Activated CD4-positive, alpha-beta T cell treated with anti-CD3 and anti-CD28 coated beads, Interleukin-2, amount 10 ng/mL, durations not matched to agents 24 days and 14 days (primary cell): ENCODE measurements at regions of chr15 and their contacts with region 1.

Region 1: GRCh38 chr15:43776718-43777583 is at the start of gene ELL3:
- DNase-seq: peak; percentile 94
- H3K4me3 Mint-ChIP-seq: peak within 1 kb of the TSS; percentile 90
- H3K27ac Mint-ChIP-seq: peak within 1 kb of the TSS; percentile 89
- H3K4me1 Mint-ChIP-seq: peaks cover 21% of the 10 kb centered on the region
- H3K27me3 Mint-ChIP-seq: peaks cover 12% of the 10 kb centered on the region
- total RNA-seq, gene ELL3: 1.2 and 1.3 TPM in 2 replicates

Region 2: DNA sequence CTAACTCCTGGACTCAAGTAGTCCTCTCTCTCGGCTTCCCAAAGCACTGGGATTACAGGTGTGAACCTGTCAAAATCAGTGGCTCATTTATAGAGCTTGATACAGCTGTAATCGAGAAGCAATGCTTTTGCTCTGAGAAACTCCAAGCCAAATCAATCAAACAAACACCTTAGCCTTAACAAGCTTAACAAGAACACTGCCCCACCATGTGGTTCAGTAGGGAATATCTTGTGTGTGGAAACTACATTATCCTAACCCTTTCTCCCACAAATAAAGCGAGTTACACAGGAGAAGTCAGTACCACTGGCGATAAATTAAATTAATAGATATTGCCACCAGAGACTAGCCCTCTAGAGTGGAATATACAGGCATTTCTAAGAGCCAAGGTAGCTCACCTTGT is 1053.9 kb before region 1 on chr15:
- intact Hi-C with region 1: no loop called
- DNase-seq: no peak
- H3K4me3 Mint-ChIP-seq: no peak overlapping the region
- H3K27ac Mint-ChIP-seq: no peak overlapping the region
- H3K4me1 Mint-ChIP-seq: no peaks in the 10 kb centered on the region
- H3K27me3 Mint-ChIP-seq: no peaks in the 10 kb centered on the region

Region 3: GRCh38 chr15:43791993-43792760 is 15.2 kb after region 1 on chr15 and contains the start of gene SERF2:
- intact Hi-C with region 1: loop called (anchors 1 kb)
- DNase-seq: peak; percentile 100
- H3K4me3 Mint-ChIP-seq: peak within 1 kb of the TSS; percentile 98
- H3K27ac Mint-ChIP-seq: peak within 1 kb of the TSS; percentile 97
- H3K4me1 Mint-ChIP-seq: peaks cover 28% of the 10 kb centered on the region
- H3K27me3 Mint-ChIP-seq: no peaks in the 10 kb centered on the region
- total RNA-seq, gene SERF2: 524 TPM in 2 replicates